ENCODE measurements at regions of chr6 and their contacts with region 1.

Region 1: GRCh38 chr6:7238900-7239589 is 74.0 kb downstream of the SSR1 start:
- DNase-seq: peak; percentile 48 to 73 (median 67)
- ATAC-seq: peak; percentile 77
- H3K4me3 ChIP-seq: no peak overlapping the region
- H3K4me3 Mint-ChIP-seq: no peak overlapping the region
- H3K27ac ChIP-seq: peak overlapping the region; percentile 2
- H3K27ac Mint-ChIP-seq: peak overlapping the region in 6 of 9 donors; percentile 39 to 88 (median 75)
- H3K4me1 ChIP-seq: peaks cover 0 to 6% of the 10 kb centered on the region in 2 donors
- H3K4me1 Mint-ChIP-seq: peaks cover 17 to 41% (median 24%) of the 10 kb centered on the region in 7 donors
- H3K27me3 ChIP-seq: no peaks in the 10 kb centered on the region
- H3K27me3 Mint-ChIP-seq: no peaks in the 10 kb centered on the region

Region 2: DNA sequence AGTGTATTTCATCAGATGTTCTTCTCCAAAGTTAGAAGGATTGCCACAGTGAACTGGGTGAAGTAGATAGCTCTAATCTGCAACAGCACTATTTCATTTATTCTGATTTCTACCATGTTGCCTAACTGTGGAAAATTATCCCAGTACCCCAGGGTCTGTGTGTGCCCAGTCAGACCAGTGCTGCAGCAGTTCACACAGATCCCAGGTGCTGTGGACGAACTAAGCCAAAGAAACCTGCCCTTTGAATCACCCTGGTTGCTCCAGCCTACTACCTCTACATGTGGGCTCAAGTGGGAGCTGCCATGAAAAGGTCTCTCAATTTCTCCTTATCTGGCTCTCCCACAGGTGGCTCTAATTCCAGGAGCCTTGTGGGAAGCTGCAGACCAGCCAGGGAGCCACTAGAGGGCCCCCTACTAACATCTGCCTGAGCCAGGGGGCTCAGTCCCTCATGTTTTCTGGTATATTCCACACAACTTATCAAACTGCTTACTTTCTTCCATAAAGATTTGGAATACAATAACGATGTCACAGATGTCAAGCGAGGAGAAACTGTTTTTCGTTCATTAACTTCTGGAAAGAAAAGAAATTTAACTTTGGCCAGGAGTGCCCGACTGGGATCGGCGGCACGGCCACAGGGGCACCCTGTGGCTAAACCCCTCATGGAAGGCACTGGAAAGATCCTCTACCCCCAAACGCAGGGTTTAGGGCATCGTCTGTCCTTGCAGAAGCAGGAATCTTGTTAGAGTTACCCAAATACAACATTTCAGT is 682.1 kb before region 1 on chr6:
- CTCF ChIA-PET with region 1: interaction called, 3 read pairs
- POLR2A ChIA-PET with region 1: no interaction called
- intact Hi-C with region 1: loop called (anchors 1 kb)
- DNase-seq: peak in 7 of 9 donors; percentile 30 to 68 (median 57)
- ATAC-seq: peak; percentile 76
- H3K4me3 ChIP-seq: no peak overlapping the region
- H3K4me3 Mint-ChIP-seq: no peak overlapping the region
- H3K27ac ChIP-seq: no peak overlapping the region
- H3K27ac Mint-ChIP-seq: peak overlapping the region in 5 of 9 donors; percentile 19 to 64 (median 32)
- H3K4me1 ChIP-seq: peaks cover 0 to 4% of the 10 kb centered on the region in 2 donors
- H3K4me1 Mint-ChIP-seq: peaks cover 0 to 50% (median 18%) of the 10 kb centered on the region in 7 donors
- H3K27me3 ChIP-seq: no peaks in the 10 kb centered on the region
- H3K27me3 Mint-ChIP-seq: peaks cover 0 to 15% (median 0%) of the 10 kb centered on the region in 5 donors

Region 3: GRCh38 chr6:6696867-6697531 is 542.0 kb before region 1 on chr6:
- CTCF ChIA-PET with region 1: no interaction called
- POLR2A ChIA-PET with region 1: no interaction called
- intact Hi-C with region 1: loop called in 1 of 2 experiments (anchors 5 kb)
- DNase-seq: peak in 2 of 9 donors; percentile 25 to 47
- ATAC-seq: peak; percentile 44
- H3K4me3 ChIP-seq: no peak overlapping the region
- H3K4me3 Mint-ChIP-seq: no peak overlapping the region
- H3K27ac ChIP-seq: no peak overlapping the region
- H3K27ac Mint-ChIP-seq: peak overlapping the region in 2 of 9 donors; percentile 40 to 69
- H3K4me1 ChIP-seq: no peaks in the 10 kb centered on the region
- H3K4me1 Mint-ChIP-seq: peaks cover 4 to 45% (median 17%) of the 10 kb centered on the region in 7 donors
- H3K27me3 ChIP-seq: no peaks in the 10 kb centered on the region
- H3K27me3 Mint-ChIP-seq: peaks cover 0 to 26% (median 0%) of the 10 kb centered on the region in 5 donors

Region 4: GRCh38 chr6:6758915-6759654 is 480.0 kb before region 1 on chr6:
- CTCF ChIA-PET with region 1: interaction called, 3 read pairs
- POLR2A ChIA-PET with region 1: no interaction called
- intact Hi-C with region 1: loop called in 1 of 2 experiments (anchors 1 kb)
- DNase-seq: peak in 6 of 9 donors; percentile 8 to 30 (median 25)
- ATAC-seq: peak; percentile 78
- H3K4me3 ChIP-seq: no peak overlapping the region
- H3K4me3 Mint-ChIP-seq: no peak overlapping the region
- H3K27ac ChIP-seq: no peak overlapping the region
- H3K27ac Mint-ChIP-seq: no peak overlapping the region
- H3K4me1 ChIP-seq: no peaks in the 10 kb centered on the region
- H3K4me1 Mint-ChIP-seq: peaks cover 0 to 6% (median 0%) of the 10 kb centered on the region in 7 donors
- H3K27me3 ChIP-seq: no peaks in the 10 kb centered on the region
- H3K27me3 Mint-ChIP-seq: peaks cover 0 to 21% (median 0%) of the 10 kb centered on the region in 5 donors

Region 5: DNA sequence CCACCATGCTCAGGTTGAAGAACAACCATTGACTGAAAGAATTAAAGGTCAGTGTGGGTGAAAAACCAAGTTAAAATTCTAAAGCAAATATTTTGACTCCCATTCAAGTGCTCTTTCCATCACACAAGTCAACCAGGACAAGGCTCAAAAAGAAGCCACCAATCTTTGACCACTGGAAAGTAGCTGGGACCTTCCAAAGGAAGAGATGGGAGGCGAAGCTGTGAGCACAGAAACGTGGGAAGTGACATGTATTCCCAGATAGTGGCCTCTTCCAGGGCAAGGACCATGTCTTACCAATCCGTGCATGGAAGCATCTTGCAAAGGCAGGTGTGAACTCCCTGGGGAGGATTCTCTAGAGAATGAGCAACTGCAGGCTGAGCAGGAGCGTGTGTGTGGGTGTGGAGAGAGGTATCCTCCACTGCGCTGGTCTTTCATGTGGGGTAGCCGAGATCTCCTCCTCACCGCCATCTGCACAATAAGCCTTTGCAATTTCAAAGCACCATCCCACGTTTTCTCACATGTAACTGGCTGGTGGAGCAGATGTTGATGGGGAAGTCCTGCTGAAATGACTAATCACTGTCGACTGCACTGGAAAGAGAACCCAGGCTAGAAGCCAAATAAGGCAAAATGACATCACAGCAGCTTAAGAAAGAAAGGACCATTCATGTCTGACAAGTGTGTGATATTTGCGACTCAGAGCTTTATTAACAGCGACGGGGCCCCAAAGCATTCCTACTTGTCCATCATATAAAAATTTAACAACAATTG is 320.6 kb before region 1 on chr6:
- CTCF ChIA-PET with region 1: no interaction called
- POLR2A ChIA-PET with region 1: no interaction called
- intact Hi-C with region 1: loop called in 1 of 2 experiments (anchors 10 kb)
- DNase-seq: peak in 5 of 9 donors; percentile 12 to 74 (median 19)
- ATAC-seq: peak; percentile 77
- H3K4me3 ChIP-seq: no peak overlapping the region
- H3K4me3 Mint-ChIP-seq: peak overlapping the region in 1 of 10 donors; percentile 8
- H3K27ac ChIP-seq: no peak overlapping the region
- H3K27ac Mint-ChIP-seq: peak overlapping the region in 1 of 9 donors; percentile 46
- H3K4me1 ChIP-seq: peaks cover 0 to 10% of the 10 kb centered on the region in 2 donors
- H3K4me1 Mint-ChIP-seq: peaks cover 7 to 25% (median 20%) of the 10 kb centered on the region in 7 donors
- H3K27me3 ChIP-seq: no peaks in the 10 kb centered on the region
- H3K27me3 Mint-ChIP-seq: peaks cover 0 to 29% (median 0%) of the 10 kb centered on the region in 5 donors

Region 6: GRCh38 chr6:7035837-7036249 is 203.2 kb before region 1 on chr6:
- CTCF ChIA-PET with region 1: no interaction called
- POLR2A ChIA-PET with region 1: no interaction called
- intact Hi-C with region 1: loop called in 1 of 2 experiments (anchors 10 kb)
- DNase-seq: no peak
- ATAC-seq: no peak
- H3K4me3 ChIP-seq: no peak overlapping the region
- H3K4me3 Mint-ChIP-seq: no peak overlapping the region
- H3K27ac ChIP-seq: no peak overlapping the region
- H3K27ac Mint-ChIP-seq: no peak overlapping the region
- H3K4me1 ChIP-seq: no peaks in the 10 kb centered on the region
- H3K4me1 Mint-ChIP-seq: peaks cover 0 to 3% (median 0%) of the 10 kb centered on the region in 7 donors
- H3K27me3 ChIP-seq: no peaks in the 10 kb centered on the region
- H3K27me3 Mint-ChIP-seq: peaks cover 0 to 39% (median 0%) of the 10 kb centered on the region in 5 donors

Region 7: GRCh38 chr6:7086488-7086887 is 152.6 kb before region 1 on chr6:
- CTCF ChIA-PET with region 1: interaction called, 3 read pairs
- POLR2A ChIA-PET with region 1: no interaction called
- intact Hi-C with region 1: loop called in 1 of 2 experiments (anchors 2 kb)
- DNase-seq: peak in 8 of 9 donors; percentile 10 to 62 (median 56)
- ATAC-seq: peak; percentile 79
- H3K4me3 ChIP-seq: peak overlapping the region; percentile 29
- H3K4me3 Mint-ChIP-seq: peak overlapping the region; percentile 77 to 93 (median 83)
- H3K27ac ChIP-seq: peak overlapping the region; percentile 58
- H3K27ac Mint-ChIP-seq: peak overlapping the region; percentile 62 to 95 (median 89)
- H3K4me1 ChIP-seq: peaks cover 20 to 27% of the 10 kb centered on the region in 2 donors
- H3K4me1 Mint-ChIP-seq: peaks cover 21 to 42% (median 39%) of the 10 kb centered on the region in 7 donors
- H3K27me3 ChIP-seq: no peaks in the 10 kb centered on the region
- H3K27me3 Mint-ChIP-seq: peaks cover 0 to 65% (median 0%) of the 10 kb centered on the region in 5 donors

Region 8: GRCh38 chr6:7172649-7173048 is 66.4 kb before region 1 on chr6:
- CTCF ChIA-PET with region 1: no interaction called
- POLR2A ChIA-PET with region 1: no interaction called
- intact Hi-C with region 1: no loop called
- DNase-seq: no peak
- ATAC-seq: no peak
- H3K4me3 ChIP-seq: no peak overlapping the region
- H3K4me3 Mint-ChIP-seq: no peak overlapping the region
- H3K27ac ChIP-seq: no peak overlapping the region
- H3K27ac Mint-ChIP-seq: peak overlapping the region in 4 of 9 donors; percentile 34 to 70 (median 60)
- H3K4me1 ChIP-seq: peaks cover 0 to 10% of the 10 kb centered on the region in 2 donors
- H3K4me1 Mint-ChIP-seq: peaks cover 9 to 51% (median 44%) of the 10 kb centered on the region in 7 donors
- H3K27me3 ChIP-seq: no peaks in the 10 kb centered on the region
- H3K27me3 Mint-ChIP-seq: no peaks in the 10 kb centered on the region

Region 9: GRCh38 chr6:7868926-7869325 is 629.9 kb after region 1 on chr6:
- CTCF ChIA-PET with region 1: no interaction called
- POLR2A ChIA-PET with region 1: no interaction called
- intact Hi-C with region 1: no loop called
- DNase-seq: no peak
- ATAC-seq: no peak
- H3K4me3 ChIP-seq: no peak overlapping the region
- H3K4me3 Mint-ChIP-seq: no peak overlapping the region
- H3K27ac ChIP-seq: no peak overlapping the region
- H3K27ac Mint-ChIP-seq: no peak overlapping the region
- H3K4me1 ChIP-seq: no peaks in the 10 kb centered on the region
- H3K4me1 Mint-ChIP-seq: no peaks in the 10 kb centered on the region
- H3K27me3 ChIP-seq: no peaks in the 10 kb centered on the region
- H3K27me3 Mint-ChIP-seq: peaks cover 0 to 7% (median 1%) of the 10 kb centered on the region in 5 donors